HEK293 (cell line): ENCODE measurements at regions of chr14 and their contacts with region 1.

Region 1: GRCh38 chr14:21123429-21123828 is 22.6 kb downstream of the TMEM253 start:
- H3K4me3 ChIP-seq: no peak overlapping the region
- H3K27ac ChIP-seq: no peak overlapping the region
- H3K4me1 ChIP-seq: no peaks in the 10 kb centered on the region
- CTCF ChIP-seq: no peak

Region 2: DNA sequence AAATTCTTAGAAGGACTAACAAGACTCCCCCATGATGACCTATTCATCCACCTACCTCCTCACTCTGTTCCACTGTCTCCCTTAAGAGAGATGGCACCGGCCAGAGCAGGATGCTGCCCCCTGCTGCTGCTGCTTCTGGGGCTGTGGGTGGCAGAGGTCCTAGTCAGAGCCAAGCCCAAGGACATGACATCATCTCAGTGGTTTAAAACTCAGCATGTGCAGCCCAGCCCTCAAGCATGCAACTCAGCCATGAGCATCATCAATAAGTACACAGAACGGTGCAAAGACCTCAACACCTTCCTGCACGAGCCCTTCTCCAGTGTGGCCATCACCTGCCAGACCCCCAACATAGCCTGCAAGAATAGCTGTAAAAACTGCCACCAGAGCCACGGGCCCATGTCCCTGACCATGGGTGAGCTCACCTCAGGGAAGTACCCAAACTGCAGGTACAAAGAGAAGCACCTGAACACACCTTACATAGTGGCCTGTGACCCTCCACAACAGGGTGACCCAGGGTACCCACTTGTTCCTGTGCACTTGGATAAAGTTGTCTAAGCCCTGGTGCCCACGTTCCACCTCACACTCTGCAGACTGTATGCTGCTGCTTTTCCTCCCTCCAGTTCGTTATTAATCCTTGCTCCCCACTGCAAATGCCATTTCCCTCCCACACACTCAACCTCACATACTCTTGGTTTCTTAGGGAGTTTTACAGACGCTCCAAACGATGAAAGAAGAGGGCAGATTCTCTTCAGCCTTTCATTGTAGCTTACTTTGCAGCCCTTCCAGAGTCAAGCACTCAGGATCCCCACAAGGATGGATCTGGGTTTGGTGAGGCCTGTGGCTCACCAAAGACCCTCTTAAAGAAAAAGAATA is 65.4 kb before region 1 on chr14 and contains the start of gene RNASE8:
- CTCF ChIA-PET with region 1: no interaction called
- POLR2A ChIA-PET with region 1: no interaction called
- H3K4me3 ChIP-seq: no peak within 1 kb of the TSS
- H3K27ac ChIP-seq: no peak within 1 kb of the TSS
- H3K4me1 ChIP-seq: no peaks in the 10 kb centered on the region; the same call in 1 of the 2 replicates
- CTCF ChIP-seq: no peak

Region 3: DNA sequence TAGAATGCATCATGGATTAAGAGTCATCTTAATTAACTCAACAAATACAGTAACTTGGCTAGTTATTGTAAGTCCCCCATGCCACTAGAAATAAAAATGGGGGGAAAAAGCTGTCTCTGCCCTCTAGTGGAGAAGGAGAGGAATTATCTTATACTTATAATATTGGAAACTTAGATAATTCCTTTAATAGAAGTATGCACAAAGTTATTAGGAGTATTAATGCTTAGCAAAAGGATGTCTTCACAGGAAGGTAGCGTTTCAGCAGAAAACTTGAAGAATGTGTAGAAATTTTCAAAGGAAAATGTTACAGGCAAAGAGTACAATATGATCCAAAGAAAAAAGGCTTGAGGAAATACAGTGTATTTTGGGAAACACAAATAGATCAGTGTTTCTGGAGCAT is 12.6 kb after region 1 on chr14:
- CTCF ChIA-PET with region 1: interaction called, 13 read pairs
- POLR2A ChIA-PET with region 1: no interaction called
- H3K4me3 ChIP-seq: no peak overlapping the region
- H3K27ac ChIP-seq: no peak overlapping the region
- H3K4me1 ChIP-seq: no peaks in the 10 kb centered on the region
- CTCF ChIP-seq: no peak